CD4-positive, alpha-beta memory T cell (primary cell): ENCODE measurements at regions of chr5 and their contacts with region 1.

Region 1: DNA sequence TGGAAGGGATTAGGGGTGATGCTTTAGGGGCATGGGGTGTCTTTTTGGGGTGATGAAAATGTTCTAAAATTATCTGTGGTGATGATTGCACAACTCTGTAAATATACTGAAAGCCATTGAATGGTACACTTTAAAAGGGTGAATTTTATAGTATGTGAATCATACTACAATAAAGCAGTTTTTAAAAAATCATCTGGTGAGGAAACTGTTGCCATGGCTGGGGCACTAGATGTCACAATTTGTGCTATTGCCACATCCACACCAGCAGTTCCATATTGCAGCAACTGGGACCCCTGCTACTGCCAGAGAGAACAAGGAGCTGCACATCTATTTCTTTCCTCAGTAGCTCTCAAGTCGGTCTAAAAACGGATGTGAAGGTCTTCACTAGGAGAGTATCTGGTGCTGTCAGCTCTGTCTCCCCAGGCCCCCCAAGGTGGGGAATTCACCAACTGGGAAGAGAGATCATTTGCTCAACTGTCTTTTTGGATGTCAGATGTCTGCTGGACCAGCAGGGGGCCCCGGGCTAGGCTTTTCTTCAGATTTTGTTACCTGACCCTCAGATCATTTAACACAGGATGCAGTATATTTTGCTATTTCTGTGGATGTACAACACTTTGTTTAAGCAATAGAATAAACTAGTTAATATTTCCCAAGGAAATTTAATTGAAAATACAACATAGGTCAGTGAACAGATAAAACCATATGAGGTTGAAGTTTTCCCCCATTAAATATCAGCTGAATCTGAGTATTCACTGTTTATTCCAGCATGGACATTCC is 13.2 kb downstream of the CMYA5 start:
- DNase-seq: peak in 4 of 5 donors; percentile 25 to 31 (median 28)
- H3K4me3 ChIP-seq: no peak overlapping the region
- H3K4me3 Mint-ChIP-seq: no peak overlapping the region
- H3K27ac ChIP-seq: no peak overlapping the region
- H3K27ac Mint-ChIP-seq: peak overlapping the region in 1 of 7 donors; percentile 19
- H3K4me1 ChIP-seq: no peaks in the 10 kb centered on the region
- H3K4me1 Mint-ChIP-seq: peaks cover 0 to 7% (median 2%) of the 10 kb centered on the region in 4 donors
- H3K27me3 ChIP-seq: no peaks in the 10 kb centered on the region
- H3K27me3 Mint-ChIP-seq: no peaks in the 10 kb centered on the region

Region 2: GRCh38 chr5:79151942-79152671 is 550.7 kb before region 1 on chr5:
- CTCF ChIA-PET with region 1: no interaction called
- POLR2A ChIA-PET with region 1: no interaction called
- intact Hi-C with region 1: no loop called
- DNase-seq: no peak
- H3K4me3 ChIP-seq: no peak overlapping the region
- H3K4me3 Mint-ChIP-seq: no peak overlapping the region
- H3K27ac ChIP-seq: no peak overlapping the region
- H3K27ac Mint-ChIP-seq: no peak overlapping the region
- H3K4me1 ChIP-seq: no peaks in the 10 kb centered on the region
- H3K4me1 Mint-ChIP-seq: no peaks in the 10 kb centered on the region
- H3K27me3 ChIP-seq: no peaks in the 10 kb centered on the region
- H3K27me3 Mint-ChIP-seq: peaks cover 2 to 6% of the 10 kb centered on the region in 2 donors

Region 3: GRCh38 chr5:79857714-79858409 is 155.1 kb after region 1 on chr5:
- CTCF ChIA-PET with region 1: interaction called, 5 read pairs
- POLR2A ChIA-PET with region 1: no interaction called
- intact Hi-C with region 1: loop called (anchors 1 kb)
- DNase-seq: peak; percentile 57 to 71 (median 61)
- H3K4me3 ChIP-seq: no peak overlapping the region
- H3K4me3 Mint-ChIP-seq: no peak overlapping the region
- H3K27ac ChIP-seq: no peak overlapping the region
- H3K27ac Mint-ChIP-seq: no peak overlapping the region
- H3K4me1 ChIP-seq: no peaks in the 10 kb centered on the region
- H3K4me1 Mint-ChIP-seq: peaks cover 0 to 4% (median 0%) of the 10 kb centered on the region in 4 donors
- H3K27me3 ChIP-seq: no peaks in the 10 kb centered on the region
- H3K27me3 Mint-ChIP-seq: peaks cover 3 to 6% of the 10 kb centered on the region in 2 donors